CD4-positive, alpha-beta T cell (primary cell): ENCODE measurements at regions of chr6 and their contacts with region 1.

Region 1: DNA sequence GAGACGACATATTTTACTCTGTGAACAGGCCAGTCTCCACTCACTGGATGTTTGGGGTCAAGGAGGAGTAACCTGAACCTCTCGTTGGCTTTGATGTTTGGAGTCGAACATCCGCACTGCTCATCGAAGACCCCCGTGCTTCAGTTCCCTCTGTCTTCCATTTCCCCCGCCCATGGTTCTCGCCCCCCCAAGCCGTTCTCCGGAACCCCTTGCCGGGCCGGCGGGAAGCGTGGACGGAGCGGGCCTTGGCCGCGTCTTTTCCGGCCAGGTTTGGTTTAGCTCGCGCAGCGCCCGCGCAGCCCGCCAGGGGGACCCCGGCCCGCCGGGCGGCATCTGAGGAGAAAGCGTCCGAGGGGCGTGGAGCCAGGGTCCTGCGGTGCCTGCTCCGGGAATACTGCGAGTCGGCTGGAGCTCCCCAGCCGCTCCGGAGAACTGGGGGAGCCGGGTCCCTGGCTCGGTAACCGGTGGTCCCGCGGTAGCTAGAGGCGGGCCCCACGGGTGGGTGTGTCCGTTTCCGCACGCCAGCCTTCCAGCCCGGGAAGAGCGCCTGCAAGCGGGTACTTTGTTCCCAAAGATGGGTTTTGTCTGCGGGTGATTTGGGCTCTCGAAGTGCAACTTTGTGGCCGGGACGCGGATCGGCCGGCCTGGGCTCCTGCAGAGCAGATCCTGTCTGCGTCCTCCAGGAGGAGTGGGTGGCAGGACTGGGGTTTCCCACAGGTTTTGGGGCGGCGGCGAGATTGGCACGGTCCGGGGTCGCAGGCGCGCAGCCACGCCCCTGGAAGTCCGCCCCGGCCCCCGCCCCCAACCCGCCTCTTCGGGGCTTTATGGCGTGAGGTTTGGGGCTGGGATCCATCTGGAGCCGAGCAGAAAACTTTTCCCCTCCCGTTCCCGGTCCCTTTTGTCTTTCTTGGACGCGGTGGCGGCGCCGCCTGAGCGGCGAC is at the start of gene TMEM200A:
- DNase-seq: peak; percentile 8 to 61 (median 33)
- ATAC-seq: peak; percentile 58
- H3K4me3 ChIP-seq: peak within 1 kb of the TSS; percentile 80
- H3K4me3 Mint-ChIP-seq: peak within 1 kb of the TSS; percentile 89
- H3K27ac ChIP-seq: no peak within 1 kb of the TSS
- H3K27ac Mint-ChIP-seq: peak within 1 kb of the TSS; percentile 18
- H3K4me1 ChIP-seq: peaks cover 15% of the 10 kb centered on the region
- H3K4me1 Mint-ChIP-seq: peaks cover 29% of the 10 kb centered on the region
- H3K27me3 ChIP-seq: peaks cover 0 to 7% of the 10 kb centered on the region in 2 experiments
- H3K27me3 Mint-ChIP-seq: peaks cover 18% of the 10 kb centered on the region
- CTCF ChIP-seq: peak; percentile 68
- total RNA-seq, gene TMEM200A: 0.30 to 0.34 TPM

Region 2: GRCh38 chr6:130337534-130337933 is 27.9 kb before region 1 on chr6:
- CTCF ChIA-PET with region 1: no interaction called
- POLR2A ChIA-PET with region 1: no interaction called
- intact Hi-C with region 1: no loop called
- DNase-seq: no peak
- ATAC-seq: no peak
- H3K4me3 ChIP-seq: no peak overlapping the region
- H3K4me3 Mint-ChIP-seq: no peak overlapping the region
- H3K27ac ChIP-seq: no peak overlapping the region
- H3K27ac Mint-ChIP-seq: no peak overlapping the region
- H3K4me1 ChIP-seq: no peaks in the 10 kb centered on the region
- H3K4me1 Mint-ChIP-seq: no peaks in the 10 kb centered on the region
- H3K27me3 ChIP-seq: no peaks in the 10 kb centered on the region
- H3K27me3 Mint-ChIP-seq: no peaks in the 10 kb centered on the region
- CTCF ChIP-seq: no peak

Region 3: GRCh38 chr6:130503146-130503545 is 137.7 kb after region 1 on chr6:
- CTCF ChIA-PET with region 1: no interaction called
- POLR2A ChIA-PET with region 1: no interaction called
- intact Hi-C with region 1: no loop called
- DNase-seq: no peak
- ATAC-seq: no peak
- H3K4me3 ChIP-seq: no peak overlapping the region
- H3K4me3 Mint-ChIP-seq: no peak overlapping the region
- H3K27ac ChIP-seq: no peak overlapping the region
- H3K27ac Mint-ChIP-seq: no peak overlapping the region
- H3K4me1 ChIP-seq: peaks cover 3% of the 10 kb centered on the region
- H3K4me1 Mint-ChIP-seq: peaks cover 29% of the 10 kb centered on the region
- H3K27me3 ChIP-seq: no peaks in the 10 kb centered on the region
- H3K27me3 Mint-ChIP-seq: no peaks in the 10 kb centered on the region
- CTCF ChIP-seq: no peak

Region 4: GRCh38 chr6:130697995-130698535 is 332.6 kb after region 1 on chr6:
- CTCF ChIA-PET with region 1: no interaction called
- POLR2A ChIA-PET with region 1: no interaction called
- intact Hi-C with region 1: loop called in 1 of 2 experiments (anchors 2 kb)
- DNase-seq: peak; percentile 13 to 72 (median 42)
- ATAC-seq: peak; percentile 71
- H3K4me3 ChIP-seq: no peak overlapping the region
- H3K4me3 Mint-ChIP-seq: no peak overlapping the region
- H3K27ac ChIP-seq: no peak overlapping the region
- H3K27ac Mint-ChIP-seq: no peak overlapping the region
- H3K4me1 ChIP-seq: peaks cover 13% of the 10 kb centered on the region
- H3K4me1 Mint-ChIP-seq: peaks cover 35% of the 10 kb centered on the region
- H3K27me3 ChIP-seq: no peaks in the 10 kb centered on the region
- H3K27me3 Mint-ChIP-seq: no peaks in the 10 kb centered on the region
- CTCF ChIP-seq: peak; percentile 85